Activated CD4-positive, alpha-beta T cell treated with anti-CD3 and anti-CD28 coated beads for 36 hours (primary cell): ENCODE measurements at regions of chr14 and their contacts with region 1.

Region 1: DNA sequence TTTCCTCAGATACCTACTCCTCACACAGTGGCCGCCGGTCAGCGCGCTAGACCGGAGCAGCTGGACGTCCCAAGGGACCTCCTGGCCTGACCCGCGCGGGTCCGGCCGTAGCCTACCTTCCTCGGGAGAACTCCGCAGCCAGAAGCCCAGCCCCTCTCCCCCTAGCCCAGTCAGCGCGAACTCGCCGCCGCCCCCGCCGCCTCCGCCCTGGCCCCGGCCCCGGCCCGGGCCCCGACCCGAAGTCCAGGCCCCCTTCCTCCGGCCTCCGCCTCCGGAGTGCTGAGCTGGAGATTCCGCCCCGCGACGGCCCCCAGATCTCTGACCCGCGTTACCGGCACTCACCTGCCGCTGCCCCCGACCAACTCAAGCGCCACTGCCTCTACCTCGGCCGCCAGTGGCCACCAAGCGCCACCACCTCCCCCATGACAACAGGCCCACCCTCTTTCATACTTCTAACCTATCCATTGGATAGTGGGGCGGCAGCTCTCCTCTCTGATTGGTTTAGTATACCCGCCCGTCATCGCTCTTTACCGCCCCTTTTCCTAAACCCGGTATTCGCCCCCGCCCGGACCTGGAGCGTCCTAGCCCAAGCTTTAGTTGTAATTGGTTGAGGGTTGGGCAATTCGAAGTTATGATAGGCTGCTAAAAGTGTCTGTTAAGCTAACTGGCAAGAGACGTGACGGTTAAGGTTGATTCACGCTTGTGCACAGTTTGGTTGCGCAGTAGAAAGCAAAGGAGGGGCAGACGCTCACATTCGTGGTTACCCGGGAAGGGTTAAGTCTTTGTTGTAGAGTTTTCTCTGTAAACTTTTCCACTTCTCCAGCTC is at the start of gene NUMB:
- DNase-seq: peak; percentile 98
- ATAC-seq: peak; percentile 97
- H3K4me3 Mint-ChIP-seq: peak within 1 kb of the TSS; percentile 95
- H3K27ac Mint-ChIP-seq: peak within 1 kb of the TSS; percentile 96
- H3K4me1 Mint-ChIP-seq: peaks cover 45% of the 10 kb centered on the region
- H3K27me3 Mint-ChIP-seq: no peaks in the 10 kb centered on the region
- total RNA-seq, gene NUMB: 35.7 to 54.9 TPM

Region 2: GRCh38 chr14:72893636-72894321 is 564.6 kb before region 1 on chr14 and contains the start of gene DPF3:
- CTCF ChIA-PET with region 1: no interaction called
- POLR2A ChIA-PET with region 1: no interaction called
- intact Hi-C with region 1: loop called in 1 of 2 experiments (anchors 2 kb)
- DNase-seq: peak; percentile 94
- ATAC-seq: peak; percentile 99
- H3K4me3 Mint-ChIP-seq: peak within 1 kb of the TSS; percentile 78
- H3K27ac Mint-ChIP-seq: peak within 1 kb of the TSS; percentile 55
- H3K4me1 Mint-ChIP-seq: peaks cover 17% of the 10 kb centered on the region
- H3K27me3 Mint-ChIP-seq: peaks cover 43% of the 10 kb centered on the region
- total RNA-seq, gene DPF3: 0.25 to 0.39 TPM

Region 3: DNA sequence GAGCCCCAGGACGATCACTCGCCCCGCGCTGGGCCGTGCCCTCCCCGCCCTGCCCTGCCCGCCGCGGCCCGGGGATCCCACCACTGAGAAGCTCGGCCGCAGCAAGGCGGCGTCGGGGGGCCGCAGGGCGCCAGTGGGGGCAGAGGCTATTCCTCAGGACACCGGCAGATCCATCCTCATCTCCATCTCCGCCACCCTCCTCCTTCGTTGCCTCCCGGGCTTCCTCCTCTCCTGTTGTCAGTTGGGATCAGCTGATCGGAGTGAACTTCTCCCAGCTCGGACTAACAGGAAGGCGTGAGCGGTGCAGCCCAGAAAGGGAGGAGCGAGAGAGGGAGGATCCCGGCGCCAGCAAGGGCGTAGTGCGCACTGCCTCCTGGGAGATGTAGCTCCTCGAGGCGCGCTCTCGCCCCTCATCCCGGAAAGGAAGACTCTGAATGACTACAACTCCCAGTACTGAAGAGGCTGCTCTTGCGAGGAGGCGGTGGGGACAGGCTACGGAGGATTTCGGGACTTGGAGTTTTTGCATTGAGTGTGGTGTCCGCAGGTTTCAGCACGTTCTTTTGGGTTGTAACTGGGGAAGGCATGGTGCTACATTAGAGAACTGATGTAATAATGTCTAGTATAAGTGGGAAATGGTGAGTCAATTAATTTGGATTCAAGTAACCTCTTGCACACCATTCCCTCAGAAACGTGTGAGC is 431.4 kb before region 1 on chr14 and contains the start of gene ZFYVE1:
- CTCF ChIA-PET with region 1: no interaction called
- POLR2A ChIA-PET with region 1: no interaction called
- intact Hi-C with region 1: loop called in 1 of 2 experiments (anchors 1 kb)
- DNase-seq: peak; percentile 96
- ATAC-seq: peak; percentile 100
- H3K4me3 Mint-ChIP-seq: peak within 1 kb of the TSS; percentile 84
- H3K27ac Mint-ChIP-seq: peak within 1 kb of the TSS; percentile 87
- H3K4me1 Mint-ChIP-seq: peaks cover 35% of the 10 kb centered on the region
- H3K27me3 Mint-ChIP-seq: no peaks in the 10 kb centered on the region
- total RNA-seq, gene ZFYVE1: 8.3 to 9.4 TPM

Region 4: DNA sequence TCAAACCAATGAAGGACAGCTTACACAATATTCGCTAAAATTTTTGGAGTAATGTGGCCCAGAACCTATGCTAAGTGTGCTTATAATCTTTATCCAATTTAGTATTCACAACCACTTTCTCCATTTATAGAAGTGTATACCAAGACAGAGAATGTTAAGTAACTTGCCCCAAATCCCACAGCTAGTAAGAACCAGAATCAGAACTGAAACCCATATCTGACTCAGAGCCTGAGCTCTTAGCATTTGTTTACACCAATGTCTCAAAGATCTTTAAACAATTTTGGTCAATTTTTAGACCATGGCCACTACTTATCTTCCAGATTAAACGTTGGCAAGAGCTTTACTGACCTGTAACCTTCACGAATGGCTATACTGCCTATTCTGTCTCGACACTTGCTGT is 168.1 kb before region 1 on chr14:
- CTCF ChIA-PET with region 1: interaction called, 7 read pairs
- POLR2A ChIA-PET with region 1: no interaction called
- intact Hi-C with region 1: loop called in 1 of 2 experiments (anchors 2 kb)
- DNase-seq: no peak
- ATAC-seq: peak; percentile 75
- H3K4me3 Mint-ChIP-seq: no peak overlapping the region
- H3K27ac Mint-ChIP-seq: no peak overlapping the region
- H3K4me1 Mint-ChIP-seq: peaks cover 31% of the 10 kb centered on the region
- H3K27me3 Mint-ChIP-seq: no peaks in the 10 kb centered on the region

Region 5: GRCh38 chr14:73491256-73492042 is 33.1 kb after region 1 on chr14:
- CTCF ChIA-PET with region 1: no interaction called
- POLR2A ChIA-PET with region 1: interaction called, 4 read pairs
- intact Hi-C with region 1: loop called in 1 of 2 experiments (anchors 1 kb)
- DNase-seq: peak; percentile 84
- ATAC-seq: peak; percentile 79
- H3K4me3 Mint-ChIP-seq: peak overlapping the region; percentile 81
- H3K27ac Mint-ChIP-seq: peak overlapping the region; percentile 75
- H3K4me1 Mint-ChIP-seq: peaks cover 40% of the 10 kb centered on the region
- H3K27me3 Mint-ChIP-seq: peaks cover 2% of the 10 kb centered on the region